ENCODE measurements at regions of chr4 and their contacts with region 1.

Region 1: GRCh38 chr4:53055274-53055673 is 193.2 kb downstream of the RASL11B start:
- DNase-seq: peak; percentile 37
- H3K4me3 ChIP-seq: no peak overlapping the region
- H3K27me3 ChIP-seq: no peaks in the 10 kb centered on the region
- CTCF ChIP-seq: no peak

Region 2: DNA sequence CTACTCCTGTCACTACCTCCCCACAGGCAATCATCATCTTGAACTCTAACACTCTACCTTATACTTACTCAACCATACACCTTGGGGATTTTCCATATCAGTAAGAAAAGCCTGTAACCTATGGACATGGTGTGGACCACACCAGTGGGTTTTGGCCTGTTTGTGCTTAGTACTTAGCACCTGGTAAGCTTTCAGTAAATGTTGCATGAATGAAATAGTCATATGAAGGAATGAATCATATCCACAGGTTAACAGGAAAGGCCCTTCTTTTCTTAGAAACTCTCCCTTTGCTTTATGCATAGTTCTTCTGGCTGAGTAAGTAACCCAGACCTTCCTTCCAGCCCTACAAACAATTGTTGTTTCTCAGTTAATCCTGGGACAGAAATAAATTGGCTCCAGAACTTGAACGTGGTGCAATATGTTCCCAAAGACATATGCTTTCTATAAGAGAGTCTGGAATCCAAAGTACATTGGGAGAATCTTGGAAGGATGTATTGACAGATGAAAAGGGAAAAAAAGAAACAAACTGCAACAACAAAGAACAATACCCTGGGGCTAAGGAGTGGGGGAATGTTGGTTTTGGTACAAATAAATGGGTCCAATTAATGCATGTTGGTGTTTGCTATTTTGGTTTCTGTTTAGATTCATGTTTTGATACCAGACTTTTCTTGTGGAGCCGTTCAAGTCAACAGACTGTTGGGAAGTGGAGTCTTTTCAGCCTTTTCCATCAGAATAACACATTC is 165.3 kb before region 1 on chr4:
- CTCF ChIA-PET with region 1: no interaction called
- POLR2A ChIA-PET with region 1: no interaction called
- DNase-seq: no peak
- H3K4me3 ChIP-seq: no peak overlapping the region
- H3K27me3 ChIP-seq: no peaks in the 10 kb centered on the region
- CTCF ChIP-seq: no peak

Region 3: GRCh38 chr4:53043891-53044650 is 11.2 kb before region 1 on chr4:
- CTCF ChIA-PET with region 1: interaction called, 16 read pairs
- POLR2A ChIA-PET with region 1: no interaction called
- DNase-seq: no peak
- H3K4me3 ChIP-seq: no peak overlapping the region
- H3K27me3 ChIP-seq: no peaks in the 10 kb centered on the region
- CTCF ChIP-seq: no peak

Measured in BJ (cell line).